T-cell (primary cell): ENCODE measurements at regions of chr5 and their contacts with region 1.

Region 1: DNA sequence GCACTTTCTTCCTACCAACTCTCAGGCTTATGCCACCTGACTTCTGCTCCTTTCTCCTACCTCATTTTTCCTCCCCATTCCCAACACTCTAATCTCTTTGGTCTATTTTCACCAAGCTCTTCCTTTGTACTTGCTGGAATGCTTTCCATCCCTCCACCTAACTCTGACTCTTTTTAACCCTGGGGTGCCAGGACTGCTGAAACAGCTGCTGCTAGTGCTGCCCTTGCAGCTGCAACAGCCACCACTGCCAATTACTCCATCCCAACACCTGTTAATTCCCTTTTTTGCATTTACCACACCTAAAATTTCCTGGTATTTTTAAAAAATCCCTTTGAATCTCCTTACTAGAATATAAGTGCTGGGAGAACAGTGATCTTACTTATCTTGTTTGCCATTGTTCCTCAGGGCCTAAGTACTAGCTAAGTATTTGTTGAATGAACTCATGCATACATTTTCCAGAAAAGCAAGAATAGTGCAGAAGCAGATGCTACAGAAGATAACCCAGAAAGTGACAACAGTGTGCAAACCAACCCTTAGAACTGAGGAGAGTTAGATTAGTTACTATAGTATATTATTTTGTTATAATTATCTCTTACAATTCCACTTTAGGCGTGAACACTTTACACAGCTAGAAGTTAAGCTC is 11.5 kb downstream of the NADK2 start:
- DNase-seq: no peak
- ATAC-seq: no peak
- H3K4me3 ChIP-seq: no peak overlapping the region
- H3K4me3 Mint-ChIP-seq: no peak overlapping the region
- H3K27ac ChIP-seq: no peak overlapping the region
- H3K27ac Mint-ChIP-seq: no peak overlapping the region
- H3K4me1 ChIP-seq: no peaks in the 10 kb centered on the region
- H3K4me1 Mint-ChIP-seq: peaks cover 8 to 19% (median 10%) of the 10 kb centered on the region in 3 donors
- H3K27me3 ChIP-seq: no peaks in the 10 kb centered on the region
- H3K27me3 Mint-ChIP-seq: no peaks in the 10 kb centered on the region

Region 2: DNA sequence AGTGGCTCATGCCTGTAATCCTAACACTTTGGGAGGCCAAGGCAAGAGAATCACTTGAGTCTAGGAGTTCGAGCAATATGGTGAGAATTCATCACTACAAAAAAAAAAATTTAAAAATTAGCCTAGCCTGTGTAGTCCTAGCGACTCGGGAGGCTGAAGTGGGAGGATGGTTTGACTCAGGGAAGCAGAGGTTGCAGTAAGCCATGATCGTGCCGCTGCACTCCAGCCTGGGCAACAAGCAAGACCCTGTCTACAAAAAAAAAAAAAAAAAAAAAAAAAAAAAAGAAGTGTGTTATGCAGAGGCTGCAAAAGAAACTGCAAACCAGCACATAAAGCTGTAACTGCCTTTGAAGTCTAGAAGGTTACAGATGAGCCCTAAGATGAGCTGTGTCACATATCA is 259.2 kb after region 1 on chr5:
- CTCF ChIA-PET with region 1: interaction called in 1 of 2 experiments, 10 read pairs
- POLR2A ChIA-PET with region 1: no interaction called
- DNase-seq: no peak
- ATAC-seq: no peak
- H3K4me3 ChIP-seq: no peak overlapping the region
- H3K4me3 Mint-ChIP-seq: no peak overlapping the region
- H3K27ac ChIP-seq: no peak overlapping the region
- H3K27ac Mint-ChIP-seq: no peak overlapping the region
- H3K4me1 ChIP-seq: no peaks in the 10 kb centered on the region
- H3K4me1 Mint-ChIP-seq: no peaks in the 10 kb centered on the region
- H3K27me3 ChIP-seq: no peaks in the 10 kb centered on the region
- H3K27me3 Mint-ChIP-seq: peaks cover 2 to 5% of the 10 kb centered on the region in 2 donors